ENCODE measurements at regions of chr16 and their contacts with region 1.

Region 1: DNA sequence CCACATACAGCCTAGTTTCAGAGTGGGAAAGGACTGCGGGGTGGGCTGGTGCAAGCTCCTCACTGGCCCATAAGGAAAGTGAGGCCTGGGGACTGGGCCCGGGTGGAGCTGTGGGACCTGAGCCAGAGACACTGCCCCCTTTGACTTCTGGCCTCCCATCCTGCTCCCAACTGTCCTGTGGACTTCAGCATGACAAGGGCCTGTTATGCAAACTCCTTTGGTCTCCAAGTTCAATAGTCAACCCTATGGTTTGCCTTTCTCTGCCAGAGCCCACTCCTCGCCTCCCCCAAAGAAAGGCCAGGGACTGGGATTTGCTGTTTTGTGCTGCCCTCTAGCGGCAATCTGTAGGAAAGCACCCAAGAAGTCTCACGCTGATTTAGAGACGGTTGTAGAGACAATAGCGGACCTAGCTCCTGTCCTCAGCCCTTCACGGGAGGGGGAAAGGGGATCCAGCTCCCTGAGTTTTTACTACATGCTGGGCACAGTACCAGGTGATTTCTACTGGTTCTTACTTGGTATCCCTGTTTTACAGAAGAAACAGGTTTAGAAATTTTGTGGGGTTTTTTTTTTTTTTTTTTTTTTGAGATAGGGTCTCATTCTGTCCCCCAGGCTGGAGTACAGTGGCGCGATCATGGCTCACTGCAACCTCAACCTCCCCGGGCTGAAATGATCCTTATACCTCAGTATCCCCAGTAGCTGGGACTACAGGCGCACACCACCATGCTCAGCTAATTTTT is 1.2 kb upstream of the TLCD3B start:
- DNase-seq: peak; percentile 86
- ATAC-seq: peak; percentile 55
- H3K4me3 Mint-ChIP-seq: peak overlapping the region; percentile 79
- H3K27ac Mint-ChIP-seq: no peak overlapping the region
- H3K4me1 Mint-ChIP-seq: peaks cover 35% of the 10 kb centered on the region
- H3K27me3 Mint-ChIP-seq: peaks cover 50% of the 10 kb centered on the region
- CTCF ChIP-seq: peak; percentile 89

Region 2: DNA sequence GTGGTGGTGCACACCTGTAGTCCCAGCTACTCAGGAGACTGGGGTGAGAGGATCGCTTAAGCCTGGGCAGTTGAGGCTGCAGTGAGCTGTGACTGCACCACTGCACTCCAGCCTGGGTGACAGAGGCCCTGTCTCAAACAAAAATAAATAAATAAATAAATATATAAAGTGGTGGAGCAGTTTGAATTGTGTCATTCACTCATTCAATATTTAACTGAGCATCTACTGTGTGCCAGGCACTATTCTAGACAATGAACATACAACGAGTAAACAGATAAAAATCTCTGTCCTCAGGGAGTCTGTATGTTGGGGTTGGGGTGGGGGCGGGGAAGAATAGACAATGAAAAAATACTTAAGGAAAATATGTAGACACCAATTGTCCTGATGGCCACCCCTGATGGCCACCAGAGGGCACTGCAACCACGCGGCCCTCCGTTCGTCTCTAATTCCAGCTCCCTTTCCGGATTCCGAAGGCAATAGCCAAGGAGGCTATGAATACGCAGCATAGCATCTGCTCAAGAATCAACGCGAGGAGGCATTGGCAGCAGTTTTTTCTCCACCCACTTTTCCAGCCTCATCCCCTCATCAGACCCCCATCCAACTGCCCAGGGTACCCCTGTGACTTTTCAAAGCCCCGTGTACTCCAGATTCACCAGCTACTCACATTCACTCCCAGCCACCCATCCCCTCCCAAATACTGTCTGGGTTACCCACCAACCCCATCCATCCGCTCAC is 331.8 kb before region 1 on chr16:
- CTCF ChIA-PET with region 1: interaction called, 64 read pairs
- POLR2A ChIA-PET with region 1: no interaction called
- DNase-seq: peak; percentile 83
- ATAC-seq: peak; percentile 66
- H3K4me3 Mint-ChIP-seq: no peak overlapping the region
- H3K27ac Mint-ChIP-seq: no peak overlapping the region
- H3K4me1 Mint-ChIP-seq: peaks cover 38% of the 10 kb centered on the region
- H3K27me3 Mint-ChIP-seq: no peaks in the 10 kb centered on the region
- CTCF ChIP-seq: peak; percentile 87

Region 3: DNA sequence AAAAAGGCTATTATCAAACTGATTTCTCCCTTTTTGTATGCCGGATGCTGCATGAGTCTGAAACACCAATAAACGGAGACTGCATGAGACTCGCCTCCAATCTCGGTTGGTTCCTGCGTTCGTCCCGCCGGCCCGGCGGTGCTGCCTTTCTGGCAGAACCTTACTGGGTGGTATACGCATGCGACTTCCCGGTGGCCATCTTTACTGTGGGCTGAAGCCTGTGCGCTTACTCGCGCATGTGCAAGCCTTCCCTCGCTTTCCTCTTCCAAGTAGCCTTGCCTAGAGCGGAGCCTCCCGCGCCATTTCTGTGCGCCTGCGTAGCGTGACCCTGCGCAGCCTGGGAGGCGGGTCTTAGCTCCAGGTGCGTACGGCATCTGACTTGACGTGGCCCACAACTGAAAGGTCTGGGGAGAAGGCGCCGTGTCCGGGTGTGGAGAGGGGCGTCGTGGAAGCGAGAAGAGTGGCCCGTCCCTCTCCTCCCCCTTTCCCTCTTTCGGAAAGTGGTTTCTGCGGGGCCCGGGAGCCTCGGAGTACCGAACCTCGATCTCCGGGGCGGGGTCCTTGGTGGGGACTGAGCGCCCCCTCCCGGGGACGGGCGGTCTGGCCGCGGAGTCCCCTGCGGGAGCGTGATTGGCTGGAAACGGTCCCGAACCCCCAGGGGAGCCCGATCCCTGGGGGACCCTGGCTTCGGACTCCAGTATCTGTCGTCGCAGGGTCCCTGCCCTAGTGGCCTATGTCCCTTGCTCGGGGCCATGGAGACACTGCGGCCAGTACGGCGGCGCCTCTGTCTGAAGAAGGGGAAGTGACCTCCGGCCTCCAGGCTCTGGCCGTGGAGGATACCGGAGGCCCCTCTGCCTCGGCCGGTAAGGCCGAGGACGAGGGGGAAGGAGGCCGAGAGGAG is 216.2 kb before region 1 on chr16 and contains the start of gene PAGR1:
- CTCF ChIA-PET with region 1: interaction called, 29 read pairs
- POLR2A ChIA-PET with region 1: interaction called, 3 read pairs
- DNase-seq: peak; percentile 98
- ATAC-seq: peak; percentile 56
- H3K4me3 Mint-ChIP-seq: peak within 1 kb of the TSS; percentile 94
- H3K27ac Mint-ChIP-seq: peak within 1 kb of the TSS; percentile 100
- H3K4me1 Mint-ChIP-seq: peaks cover 56% of the 10 kb centered on the region
- H3K27me3 Mint-ChIP-seq: no peaks in the 10 kb centered on the region; the same call in 1 of the 2 replicates
- CTCF ChIP-seq: peak; percentile 81
- total RNA-seq, gene PAGR1: 60.1 to 69.0 TPM (median 66.8 TPM) in 3 replicates

Region 4: DNA sequence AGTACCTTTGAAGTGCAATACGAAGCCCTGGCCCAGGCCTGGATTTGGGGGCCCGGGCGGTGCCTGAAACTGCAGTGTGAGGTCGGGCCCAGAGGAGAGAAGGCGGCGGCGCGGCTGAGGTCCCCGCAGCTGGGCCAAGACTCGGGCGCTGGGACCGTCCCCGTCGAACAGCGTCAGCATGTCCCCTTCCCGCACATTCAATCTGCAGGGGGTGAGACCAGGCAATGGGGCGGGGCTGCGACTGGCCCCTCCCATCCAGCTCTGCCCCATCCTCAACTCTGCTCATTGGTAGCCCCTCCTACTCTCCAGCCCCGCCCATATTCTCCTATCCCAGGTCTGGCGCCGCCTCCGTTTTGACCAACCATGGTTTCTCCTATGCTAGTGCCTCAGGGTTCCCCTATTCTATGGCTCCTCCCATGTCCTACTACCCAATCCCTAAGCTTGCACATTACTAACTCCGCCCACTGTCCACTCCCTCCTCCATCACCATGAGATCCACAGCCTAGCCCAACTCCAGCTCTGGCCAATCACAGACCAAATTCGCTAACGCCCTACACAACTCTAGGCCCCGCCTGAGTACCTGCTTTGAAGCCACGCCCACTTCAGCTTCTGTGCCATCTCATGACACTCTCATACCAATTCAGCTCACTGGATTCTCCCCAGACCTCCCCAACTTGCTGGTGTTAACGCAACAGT is 154.8 kb before region 1 on chr16:
- CTCF ChIA-PET with region 1: interaction called, 12 read pairs
- POLR2A ChIA-PET with region 1: no interaction called
- DNase-seq: peak; percentile 100
- ATAC-seq: peak; percentile 97
- H3K4me3 Mint-ChIP-seq: peak overlapping the region; percentile 87
- H3K27ac Mint-ChIP-seq: peak overlapping the region; percentile 98
- H3K4me1 Mint-ChIP-seq: peaks cover 10% of the 10 kb centered on the region
- H3K27me3 Mint-ChIP-seq: peaks cover 3% of the 10 kb centered on the region; the same call in 1 of the 2 replicates
- CTCF ChIP-seq: no peak

Region 5: GRCh38 chr16:29973384-29974246 is 58.6 kb before region 1 on chr16 and contains the start of gene TAOK2:
- CTCF ChIA-PET with region 1: interaction called, 36 read pairs
- POLR2A ChIA-PET with region 1: no interaction called
- DNase-seq: peak; percentile 100
- ATAC-seq: peak; percentile 97
- H3K4me3 Mint-ChIP-seq: peak within 1 kb of the TSS; percentile 92
- H3K27ac Mint-ChIP-seq: peak within 1 kb of the TSS; percentile 82
- H3K4me1 Mint-ChIP-seq: peaks cover 27% of the 10 kb centered on the region
- H3K27me3 Mint-ChIP-seq: peaks cover 21% of the 10 kb centered on the region
- CTCF ChIP-seq: no peak
- total RNA-seq, gene TAOK2: 38.3 to 42.4 TPM (median 39.2 TPM) in 3 replicates

Region 6: GRCh38 chr16:30052671-30053372 is 20.6 kb after region 1 on chr16:
- CTCF ChIA-PET with region 1: interaction called, 79 read pairs
- POLR2A ChIA-PET with region 1: no interaction called
- DNase-seq: peak; percentile 94
- ATAC-seq: peak; percentile 60
- H3K4me3 Mint-ChIP-seq: peak overlapping the region; percentile 82
- H3K27ac Mint-ChIP-seq: no peak overlapping the region
- H3K4me1 Mint-ChIP-seq: peaks cover 14% of the 10 kb centered on the region
- H3K27me3 Mint-ChIP-seq: peaks cover 37% of the 10 kb centered on the region
- CTCF ChIP-seq: no peak

Region 7: DNA sequence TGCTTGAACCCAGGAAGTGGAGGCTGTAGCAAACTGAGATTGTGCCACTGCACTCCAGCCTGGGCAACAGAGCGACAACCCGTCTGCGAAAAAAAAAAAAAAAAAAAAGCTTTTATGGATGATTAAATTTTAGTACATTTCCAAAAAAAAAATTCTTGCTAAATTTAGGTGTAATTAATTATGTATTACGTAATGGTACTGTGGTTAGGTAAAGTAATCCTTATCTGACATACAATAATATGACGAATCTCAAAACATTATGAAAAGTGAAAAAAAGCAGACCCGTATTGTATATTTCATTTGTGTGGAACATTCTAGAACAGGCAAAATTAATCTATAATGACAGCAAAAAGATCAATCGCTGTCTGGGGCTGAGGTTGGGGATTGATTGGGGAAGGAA is 140.8 kb after region 1 on chr16:
- CTCF ChIA-PET with region 1: no interaction called
- POLR2A ChIA-PET with region 1: no interaction called
- DNase-seq: no peak
- ATAC-seq: no peak
- H3K4me3 Mint-ChIP-seq: no peak overlapping the region
- H3K27ac Mint-ChIP-seq: no peak overlapping the region
- H3K4me1 Mint-ChIP-seq: no peaks in the 10 kb centered on the region
- H3K27me3 Mint-ChIP-seq: peaks cover 13% of the 10 kb centered on the region
- CTCF ChIP-seq: no peak

Measured in WTC11 (cell line).